Ovary (tissue), 10 donors: ENCODE measurements at regions of chr10 and their contacts with region 1.

Region 1: GRCh38 chr10:101938316-101939281 is 95.0 kb upstream of the KCNIP2 start:
- DNase-seq: peak in 1 of 5 donors; percentile 9
- H3K4me3 ChIP-seq: no peak overlapping the region
- H3K27ac ChIP-seq: no peak overlapping the region
- H3K4me1 ChIP-seq: peaks cover 13% of the 10 kb centered on the region
- H3K27me3 ChIP-seq: no peaks in the 10 kb centered on the region
- CTCF ChIP-seq: no peak
- EP300 ChIP-seq: no peak
- POLR2A ChIP-seq: no peak

Region 2: DNA sequence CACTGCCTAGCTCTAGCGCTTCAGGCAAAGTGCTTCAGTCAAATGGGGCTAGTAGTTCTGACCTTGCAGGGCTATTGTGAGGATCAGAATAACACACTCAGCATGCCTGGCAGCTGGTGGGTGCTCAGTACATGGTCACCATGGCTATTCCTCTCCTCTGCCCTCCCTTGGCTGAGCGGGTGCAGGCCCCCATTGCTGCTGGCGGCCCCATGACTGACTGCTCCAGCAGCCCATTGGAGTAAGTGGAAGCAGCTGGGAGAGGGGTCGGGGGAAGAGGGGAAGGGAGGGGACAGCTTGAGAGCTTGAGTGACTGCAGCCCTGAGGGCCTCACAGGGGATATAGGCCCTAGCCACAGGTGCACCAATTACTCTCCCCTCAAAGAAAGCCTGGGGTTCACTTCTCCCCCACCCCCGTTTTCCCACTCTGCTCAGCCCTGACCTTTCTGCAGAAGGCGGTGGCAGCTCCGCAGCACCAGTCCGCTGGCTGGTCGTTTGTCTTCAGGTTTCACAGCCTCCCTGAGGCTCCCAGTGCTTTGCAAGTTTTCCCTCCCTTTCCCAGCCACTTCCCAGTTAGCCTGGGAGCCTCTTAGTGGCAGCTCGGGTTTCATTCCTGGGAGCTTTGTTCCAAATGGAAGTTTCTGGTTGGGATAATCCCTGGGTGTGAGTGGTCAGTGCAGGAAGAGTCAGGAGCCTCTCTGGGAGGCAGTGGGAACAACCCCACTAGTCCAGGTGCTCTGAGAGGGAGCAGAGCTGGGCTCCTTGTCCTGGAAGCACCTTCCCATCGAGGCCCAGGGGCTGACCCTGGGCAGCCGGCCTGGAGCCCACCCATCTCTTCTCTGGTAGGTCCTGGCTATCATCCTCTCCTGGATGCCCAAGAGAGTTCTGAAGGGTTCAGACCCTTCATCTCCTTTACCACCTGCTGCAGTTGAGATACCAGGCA is 179.0 kb before region 1 on chr10:
- intact Hi-C with region 1: loop called in 1 of 4 experiments (anchors 5 kb)
- DNase-seq: no peak
- H3K4me3 ChIP-seq: no peak overlapping the region
- H3K27ac ChIP-seq: no peak overlapping the region
- H3K4me1 ChIP-seq: no peaks in the 10 kb centered on the region
- H3K27me3 ChIP-seq: no peaks in the 10 kb centered on the region
- CTCF ChIP-seq: no peak
- EP300 ChIP-seq: no peak
- POLR2A ChIP-seq: no peak